ENCODE measurements at regions of chr2 and their contacts with region 1.

Region 1: DNA sequence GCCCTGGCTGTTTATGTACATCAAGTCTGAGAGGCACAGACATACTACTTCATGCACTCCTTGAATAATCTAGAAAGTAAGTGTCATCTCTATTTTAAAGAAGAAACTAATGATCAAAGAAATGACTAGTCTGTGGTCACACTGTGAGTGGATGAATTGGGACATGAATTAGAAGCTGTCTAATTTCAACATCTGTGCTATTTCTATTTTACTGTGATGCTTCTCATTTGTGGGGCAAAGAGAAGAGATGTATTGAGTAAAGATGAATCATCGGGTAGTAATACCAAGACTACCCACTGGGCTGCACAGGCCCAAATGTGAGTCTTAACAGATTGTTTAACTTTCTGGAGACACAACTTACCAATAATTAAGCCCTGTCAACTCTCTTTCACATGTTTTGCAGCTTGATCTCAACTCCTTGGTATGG is 42.4 kb upstream of the MTIF2 start:
- DNase-seq: peak; percentile 76
- ATAC-seq: peak; percentile 98
- H3K4me3 ChIP-seq: no peak overlapping the region
- H3K27ac ChIP-seq: no peak overlapping the region
- H3K4me1 ChIP-seq: peaks cover 6% of the 10 kb centered on the region; the same call in 1 of the 2 replicates
- H3K27me3 ChIP-seq: no peaks in the 10 kb centered on the region
- CTCF ChIP-seq: peak in 2 of 3 experiments; percentile 37 to 43; a peak in 3 of 6 replicates
- EP300 ChIP-seq: peak; percentile 79; a peak in 3 of 4 replicates
- POLR2A ChIP-seq: no peak
- RAD21 ChIP-seq: peak; percentile 37; the same call in 1 of the 2 replicates

Region 2: GRCh38 chr2:54952978-54953545 is 358.4 kb before region 1 on chr2:
- CTCF ChIA-PET with region 1: no interaction called
- POLR2A ChIA-PET with region 1: no interaction called
- RAD21 ChIA-PET with region 1: no interaction called
- SMC1A ChIA-PET with region 1: no interaction called
- in situ Hi-C with region 1: no loop called
- intact Hi-C with region 1: no loop called
- DNase-seq: no peak
- ATAC-seq: no peak
- H3K4me3 ChIP-seq: no peak overlapping the region
- H3K27ac ChIP-seq: no peak overlapping the region
- H3K4me1 ChIP-seq: no peaks in the 10 kb centered on the region; the same call in 1 of the 2 replicates
- H3K27me3 ChIP-seq: no peaks in the 10 kb centered on the region
- CTCF ChIP-seq: no peak
- EP300 ChIP-seq: no peak
- POLR2A ChIP-seq: no peak
- RAD21 ChIP-seq: no peak

Region 3: DNA sequence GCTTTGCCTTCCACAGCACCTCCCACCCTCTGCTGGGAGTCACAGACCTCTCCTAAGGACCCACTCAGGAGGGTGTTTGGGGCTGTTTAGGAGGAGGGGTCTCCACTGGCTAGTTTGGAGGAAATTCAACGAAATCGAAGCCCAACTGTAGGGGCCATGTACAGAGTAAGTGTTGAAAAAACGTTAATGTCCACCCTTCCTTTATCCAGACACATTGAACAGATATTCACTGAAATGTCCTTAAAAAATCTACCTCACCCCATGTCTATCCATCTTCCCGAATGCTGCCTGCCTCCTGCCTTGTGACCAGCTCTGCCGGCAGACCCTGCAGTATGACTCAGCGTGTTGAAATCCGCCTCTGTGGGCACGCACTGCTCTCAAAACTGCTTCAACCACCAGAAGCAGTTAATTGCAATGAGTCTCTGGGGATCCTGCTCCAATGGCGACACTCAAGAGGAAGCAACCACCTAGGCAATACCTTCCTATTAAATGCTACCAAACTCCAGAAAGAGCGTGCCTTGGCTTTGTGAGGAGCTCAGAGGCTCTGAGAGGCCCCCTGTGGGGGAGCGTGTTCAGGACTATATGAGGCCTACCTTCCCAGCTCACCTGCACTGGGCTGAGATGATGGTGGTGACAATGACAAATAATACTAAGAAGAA is 199.8 kb before region 1 on chr2:
- CTCF ChIA-PET with region 1: no interaction called
- POLR2A ChIA-PET with region 1: no interaction called
- RAD21 ChIA-PET with region 1: no interaction called
- SMC1A ChIA-PET with region 1: no interaction called
- in situ Hi-C with region 1: no loop called
- intact Hi-C with region 1: no loop called
- DNase-seq: no peak
- ATAC-seq: no peak
- H3K4me3 ChIP-seq: no peak overlapping the region
- H3K27ac ChIP-seq: no peak overlapping the region
- H3K4me1 ChIP-seq: no peaks in the 10 kb centered on the region
- H3K27me3 ChIP-seq: no peaks in the 10 kb centered on the region
- CTCF ChIP-seq: no peak
- EP300 ChIP-seq: no peak
- POLR2A ChIP-seq: no peak
- RAD21 ChIP-seq: no peak

Region 4: GRCh38 chr2:55419679-55420438 is 108.4 kb after region 1 on chr2 and contains the start of gene CCDC88A:
- CTCF ChIA-PET with region 1: no interaction called
- POLR2A ChIA-PET with region 1: no interaction called
- RAD21 ChIA-PET with region 1: no interaction called
- SMC1A ChIA-PET with region 1: interaction called, 3 read pairs
- in situ Hi-C with region 1: no loop called
- intact Hi-C with region 1: loop called (anchors 5 kb)
- DNase-seq: peak; percentile 59
- ATAC-seq: peak; percentile 83
- H3K4me3 ChIP-seq: peak within 1 kb of the TSS; percentile 94
- H3K27ac ChIP-seq: peak within 1 kb of the TSS; percentile 75
- H3K4me1 ChIP-seq: peaks cover 3% of the 10 kb centered on the region; the same call in 1 of the 2 replicates
- H3K27me3 ChIP-seq: no peaks in the 10 kb centered on the region
- CTCF ChIP-seq: peak in 1 of 3 experiments; percentile 15; a peak in 1 of 6 replicates
- EP300 ChIP-seq: no peak
- POLR2A ChIP-seq: peak; percentile 89
- RAD21 ChIP-seq: no peak
- polyA plus RNA-seq, gene CCDC88A: 27.7 to 30.2 TPM